ENCODE measurements at regions of chr4 and their contacts with region 1.

Region 1: GRCh38 chr4:183147983-183148382 is 48.9 kb downstream of the WWC2 start:
- DNase-seq: no peak
- H3K4me3 ChIP-seq: no peak overlapping the region
- H3K27me3 ChIP-seq: no peaks in the 10 kb centered on the region
- CTCF ChIP-seq: no peak

Region 2: DNA sequence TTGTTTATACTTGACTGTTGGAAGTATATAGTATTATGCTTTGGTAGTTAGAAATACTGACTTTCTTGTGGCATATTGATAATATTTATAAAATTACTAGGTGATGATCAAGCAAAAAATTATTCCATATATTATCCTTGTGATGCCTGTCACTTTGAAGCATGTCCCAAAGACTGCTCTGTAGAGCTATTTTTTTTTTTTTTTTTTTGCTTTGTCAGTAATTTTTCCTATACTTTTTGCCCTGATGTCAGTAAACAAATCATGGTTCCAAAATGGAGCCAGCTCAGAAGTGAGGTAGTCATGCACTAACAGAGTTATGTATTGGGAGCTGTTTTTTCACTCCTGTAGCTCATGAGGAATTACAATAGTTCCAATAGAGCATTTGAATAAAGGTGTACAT is 37.7 kb before region 1 on chr4:
- CTCF ChIA-PET with region 1: interaction called, 3 read pairs
- POLR2A ChIA-PET with region 1: interaction called, 12 read pairs
- DNase-seq: no peak
- H3K4me3 ChIP-seq: no peak overlapping the region
- H3K27me3 ChIP-seq: no peaks in the 10 kb centered on the region
- CTCF ChIP-seq: no peak

Region 3: GRCh38 chr4:183287677-183288076 is 139.7 kb after region 1 on chr4:
- CTCF ChIA-PET with region 1: no interaction called
- POLR2A ChIA-PET with region 1: no interaction called
- DNase-seq: no peak
- H3K4me3 ChIP-seq: no peak overlapping the region
- H3K27me3 ChIP-seq: no peaks in the 10 kb centered on the region
- CTCF ChIP-seq: no peak

Measured in BJ (cell line).